IMR-90 (cell line): ENCODE measurements at regions of chr17 and their contacts with region 1.

Region 1: GRCh38 chr17:14300575-14301278 is at the start of gene HS3ST3B1:
- DNase-seq: peak; percentile 100
- ATAC-seq: peak; percentile 84
- H3K4me3 ChIP-seq: peak within 1 kb of the TSS; percentile 95
- H3K27ac ChIP-seq: peak within 1 kb of the TSS; percentile 92
- H3K4me1 ChIP-seq: peaks cover 4% of the 10 kb centered on the region; the same call in 1 of the 2 replicates
- H3K27me3 ChIP-seq: peaks cover 3% of the 10 kb centered on the region; the same call in 1 of the 2 replicates
- CTCF ChIP-seq: no peak
- POLR2A ChIP-seq: peak; percentile 92
- RAD21 ChIP-seq: peak; percentile 41
- total RNA-seq, gene HS3ST3B1: 4.3 and 5.8 TPM in 2 replicates

Region 2: DNA sequence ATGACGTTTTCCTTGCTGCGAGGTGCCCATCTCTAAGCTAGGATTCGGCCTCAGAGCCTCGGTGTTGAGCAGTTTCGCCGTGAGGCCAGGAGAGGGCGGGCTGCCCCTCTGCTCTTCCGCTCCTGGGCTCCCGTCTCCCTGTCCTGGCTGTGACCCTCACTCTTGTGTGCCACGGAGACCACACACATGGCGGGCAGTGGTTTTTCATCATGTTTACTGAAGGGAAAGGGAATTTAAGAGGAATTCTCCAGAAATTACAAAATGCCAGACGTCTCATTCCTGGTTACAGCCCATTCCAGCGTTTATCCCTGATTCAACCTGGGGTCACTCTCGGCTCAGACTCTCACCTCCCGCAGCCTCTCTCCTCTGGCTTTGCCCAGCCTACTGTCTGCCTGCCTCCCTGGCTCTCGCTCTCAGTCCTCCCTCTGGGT is 1186.1 kb before region 1 on chr17:
- CTCF ChIA-PET with region 1: no interaction called
- POLR2A ChIA-PET with region 1: no interaction called
- dilution Hi-C with region 1: no loop called
- in situ Hi-C with region 1: no loop called
- intact Hi-C with region 1: loop called (anchors 1 kb)
- DNase-seq: peak; percentile 28
- ATAC-seq: peak; percentile 100
- H3K4me3 ChIP-seq: no peak overlapping the region; the same call in 1 of the 2 replicates
- H3K27ac ChIP-seq: no peak overlapping the region
- H3K4me1 ChIP-seq: no peaks in the 10 kb centered on the region
- H3K27me3 ChIP-seq: peaks cover 17% of the 10 kb centered on the region
- CTCF ChIP-seq: peak; percentile 71
- POLR2A ChIP-seq: no peak
- RAD21 ChIP-seq: peak; percentile 75

Region 3: GRCh38 chr17:13594762-13595598 is 705.7 kb before region 1 on chr17:
- CTCF ChIA-PET with region 1: interaction called, 17 read pairs
- POLR2A ChIA-PET with region 1: interaction called, 5 read pairs
- dilution Hi-C with region 1: no loop called
- in situ Hi-C with region 1: loop called (anchors 5 kb)
- intact Hi-C with region 1: loop called (anchors 1 kb)
- DNase-seq: peak; percentile 89
- ATAC-seq: peak; percentile 44
- H3K4me3 ChIP-seq: peak overlapping the region; percentile 9; the same call in 1 of the 2 replicates
- H3K27ac ChIP-seq: peak overlapping the region; percentile 59; the same call in 1 of the 2 replicates
- H3K4me1 ChIP-seq: peaks cover 21% of the 10 kb centered on the region
- H3K27me3 ChIP-seq: no peaks in the 10 kb centered on the region
- CTCF ChIP-seq: peak; percentile 85
- POLR2A ChIP-seq: 0 out of 2 replicates have a peak, but pooled peaks have one; percentile 25
- RAD21 ChIP-seq: peak; percentile 75

Region 4: DNA sequence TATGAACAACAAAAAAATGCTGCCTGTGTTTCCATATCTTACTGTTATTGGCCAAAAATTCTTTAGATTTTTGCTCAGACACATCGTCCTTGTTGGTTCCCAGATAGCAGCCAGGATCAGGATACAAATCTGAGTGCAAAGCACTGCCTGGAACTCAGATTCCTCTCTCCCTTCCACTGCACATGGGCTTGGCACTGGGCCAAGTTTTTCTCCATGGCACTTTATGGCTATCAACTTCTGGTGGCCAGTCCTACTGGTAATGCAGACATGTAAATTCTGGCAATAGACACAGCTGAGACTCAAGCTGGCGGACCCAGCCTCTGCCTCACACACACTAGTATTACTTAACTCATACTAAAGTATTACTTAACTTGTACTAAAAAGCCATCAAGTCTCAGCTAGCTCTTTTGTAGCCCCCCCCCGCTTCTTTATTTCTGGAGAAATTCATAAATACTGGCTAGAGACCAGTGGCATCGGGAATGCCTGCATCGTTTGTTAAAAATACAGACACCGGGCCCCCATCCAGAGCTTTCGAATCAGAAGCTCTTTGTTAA is 412.6 kb before region 1 on chr17:
- CTCF ChIA-PET with region 1: no interaction called
- POLR2A ChIA-PET with region 1: no interaction called
- dilution Hi-C with region 1: no loop called
- in situ Hi-C with region 1: no loop called
- intact Hi-C with region 1: loop called (anchors 5 kb)
- DNase-seq: peak; percentile 35
- ATAC-seq: peak; percentile 30
- H3K4me3 ChIP-seq: no peak overlapping the region
- H3K27ac ChIP-seq: no peak overlapping the region
- H3K4me1 ChIP-seq: peaks cover 10% of the 10 kb centered on the region
- H3K27me3 ChIP-seq: no peaks in the 10 kb centered on the region
- CTCF ChIP-seq: no peak
- POLR2A ChIP-seq: no peak
- RAD21 ChIP-seq: no peak

Region 5: GRCh38 chr17:14069251-14070021 is 231.3 kb before region 1 on chr17 and contains the start of gene COX10:
- CTCF ChIA-PET with region 1: interaction called, 3 read pairs
- POLR2A ChIA-PET with region 1: no interaction called
- dilution Hi-C with region 1: no loop called
- in situ Hi-C with region 1: loop called (anchors 10 kb)
- intact Hi-C with region 1: loop called (anchors 2 kb)
- DNase-seq: peak; percentile 71
- ATAC-seq: peak; percentile 99
- H3K4me3 ChIP-seq: peak within 1 kb of the TSS; percentile 86
- H3K27ac ChIP-seq: peak within 1 kb of the TSS; percentile 88
- H3K4me1 ChIP-seq: peaks cover 3% of the 10 kb centered on the region
- H3K27me3 ChIP-seq: no peaks in the 10 kb centered on the region
- CTCF ChIP-seq: no peak
- POLR2A ChIP-seq: peak; percentile 93
- RAD21 ChIP-seq: no peak; the same call in 1 of the 2 replicates
- total RNA-seq, gene COX10: 10.3 and 16.1 TPM in 2 replicates

Region 6: DNA sequence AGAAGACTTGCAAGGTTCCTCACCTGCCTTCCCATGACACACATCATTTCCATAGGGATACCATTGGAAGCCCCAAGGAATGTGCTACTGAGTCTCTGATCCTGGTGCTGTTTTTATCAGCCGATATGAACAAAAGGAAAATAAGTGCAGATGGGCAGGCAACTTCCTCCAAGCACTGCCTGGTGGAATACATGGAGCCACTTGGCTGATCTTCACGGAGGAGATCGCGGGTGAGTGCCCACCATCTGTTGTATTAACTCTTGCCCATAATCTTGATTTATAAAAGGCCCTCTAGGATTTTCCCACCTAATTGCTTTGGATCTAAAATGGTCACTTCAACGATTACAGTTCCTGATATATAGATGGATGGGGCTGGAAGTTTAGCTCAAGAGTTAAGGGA is 39.3 kb before region 1 on chr17:
- CTCF ChIA-PET with region 1: no interaction called
- POLR2A ChIA-PET with region 1: no interaction called
- dilution Hi-C with region 1: no loop called
- in situ Hi-C with region 1: no loop called
- intact Hi-C with region 1: no loop called
- DNase-seq: no peak
- ATAC-seq: no peak
- H3K4me3 ChIP-seq: no peak overlapping the region
- H3K27ac ChIP-seq: no peak overlapping the region
- H3K4me1 ChIP-seq: no peaks in the 10 kb centered on the region
- H3K27me3 ChIP-seq: peaks cover 15% of the 10 kb centered on the region
- CTCF ChIP-seq: no peak
- POLR2A ChIP-seq: no peak
- RAD21 ChIP-seq: no peak

Region 7: GRCh38 chr17:14337596-14338079 is 36.9 kb after region 1 on chr17:
- CTCF ChIA-PET with region 1: no interaction called
- POLR2A ChIA-PET with region 1: no interaction called
- dilution Hi-C with region 1: no loop called
- in situ Hi-C with region 1: no loop called
- intact Hi-C with region 1: no loop called
- DNase-seq: no peak
- ATAC-seq: no peak
- H3K4me3 ChIP-seq: no peak overlapping the region
- H3K27ac ChIP-seq: no peak overlapping the region
- H3K4me1 ChIP-seq: peaks cover 2% of the 10 kb centered on the region; the same call in 1 of the 2 replicates
- H3K27me3 ChIP-seq: no peaks in the 10 kb centered on the region
- CTCF ChIP-seq: no peak
- POLR2A ChIP-seq: no peak
- RAD21 ChIP-seq: no peak

Region 8: DNA sequence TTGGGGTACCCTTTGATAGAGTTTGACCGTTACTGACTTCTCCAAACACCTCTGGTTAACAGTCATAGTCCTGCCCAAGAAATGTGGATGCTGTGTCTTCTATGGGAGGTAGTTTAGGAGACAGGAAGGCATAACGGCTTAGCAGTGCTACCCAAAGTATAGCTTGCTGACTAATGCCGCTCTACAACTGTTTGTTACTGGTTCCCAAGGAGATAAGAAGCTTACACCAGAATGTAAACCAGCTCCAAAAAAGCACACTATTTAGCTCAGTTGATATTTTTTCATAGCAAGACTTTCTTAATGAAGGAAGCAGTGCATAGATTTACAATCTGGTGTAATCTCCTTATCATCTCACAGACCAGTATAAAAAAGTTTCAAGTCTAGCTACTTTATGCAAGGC is 95.8 kb after region 1 on chr17:
- CTCF ChIA-PET with region 1: no interaction called
- POLR2A ChIA-PET with region 1: no interaction called
- dilution Hi-C with region 1: no loop called
- in situ Hi-C with region 1: no loop called
- intact Hi-C with region 1: no loop called
- DNase-seq: peak; percentile 34
- ATAC-seq: peak; percentile 90
- H3K4me3 ChIP-seq: no peak overlapping the region
- H3K27ac ChIP-seq: no peak overlapping the region
- H3K4me1 ChIP-seq: no peaks in the 10 kb centered on the region
- H3K27me3 ChIP-seq: no peaks in the 10 kb centered on the region; the same call in 1 of the 2 replicates
- CTCF ChIP-seq: no peak
- POLR2A ChIP-seq: no peak
- RAD21 ChIP-seq: no peak

Region 9: GRCh38 chr17:14926526-14927122 is 625.9 kb after region 1 on chr17:
- CTCF ChIA-PET with region 1: interaction called, 5 read pairs
- POLR2A ChIA-PET with region 1: no interaction called
- dilution Hi-C with region 1: no loop called
- in situ Hi-C with region 1: no loop called
- intact Hi-C with region 1: loop called (anchors 1 kb)
- DNase-seq: peak; percentile 74
- ATAC-seq: peak; percentile 49; the same call in 1 of the 2 replicates
- H3K4me3 ChIP-seq: no peak overlapping the region
- H3K27ac ChIP-seq: no peak overlapping the region
- H3K4me1 ChIP-seq: no peaks in the 10 kb centered on the region
- H3K27me3 ChIP-seq: peaks cover 4% of the 10 kb centered on the region
- CTCF ChIP-seq: peak; percentile 89
- POLR2A ChIP-seq: 0 out of 2 replicates have a peak, but pooled peaks have one; percentile 31
- RAD21 ChIP-seq: peak; percentile 99